ENCODE measurements at regions of chr17 and their contacts with region 1.

Region 1: GRCh38 chr17:28967221-28968140 is 16.2 kb upstream of the PHF12 start:
- DNase-seq: no peak
- ATAC-seq: no peak
- H3K4me3 Mint-ChIP-seq: no peak overlapping the region
- H3K27ac Mint-ChIP-seq: peak overlapping the region; percentile 51
- H3K4me1 Mint-ChIP-seq: peaks cover 4% of the 10 kb centered on the region
- H3K27me3 Mint-ChIP-seq: peaks cover 15% of the 10 kb centered on the region

Region 2: DNA sequence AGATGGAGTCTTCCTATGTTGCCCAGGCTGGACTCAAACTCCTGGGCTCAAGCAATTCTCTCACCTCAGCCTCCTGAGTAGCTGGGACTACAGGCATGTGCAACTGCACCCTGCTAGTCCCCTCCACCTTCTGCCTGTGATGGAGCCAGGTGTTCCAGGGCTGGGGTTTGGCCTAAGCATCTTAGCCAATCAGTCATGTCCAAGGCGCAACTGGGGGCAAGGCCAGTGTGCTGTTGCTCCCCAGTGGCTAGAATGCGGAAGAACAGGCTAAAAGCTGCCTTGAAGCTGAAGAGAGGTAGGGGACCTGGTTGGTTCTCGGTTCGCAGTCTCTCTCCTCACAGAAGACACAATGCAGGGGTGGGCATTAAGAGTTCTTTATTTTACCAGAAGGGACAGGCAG is 88.5 kb before region 1 on chr17:
- CTCF ChIA-PET with region 1: no interaction called
- POLR2A ChIA-PET with region 1: no interaction called
- DNase-seq: no peak
- ATAC-seq: no peak
- H3K4me3 Mint-ChIP-seq: no peak overlapping the region
- H3K27ac Mint-ChIP-seq: no peak overlapping the region
- H3K4me1 Mint-ChIP-seq: peaks cover 13% of the 10 kb centered on the region
- H3K27me3 Mint-ChIP-seq: no peaks in the 10 kb centered on the region

Region 3: DNA sequence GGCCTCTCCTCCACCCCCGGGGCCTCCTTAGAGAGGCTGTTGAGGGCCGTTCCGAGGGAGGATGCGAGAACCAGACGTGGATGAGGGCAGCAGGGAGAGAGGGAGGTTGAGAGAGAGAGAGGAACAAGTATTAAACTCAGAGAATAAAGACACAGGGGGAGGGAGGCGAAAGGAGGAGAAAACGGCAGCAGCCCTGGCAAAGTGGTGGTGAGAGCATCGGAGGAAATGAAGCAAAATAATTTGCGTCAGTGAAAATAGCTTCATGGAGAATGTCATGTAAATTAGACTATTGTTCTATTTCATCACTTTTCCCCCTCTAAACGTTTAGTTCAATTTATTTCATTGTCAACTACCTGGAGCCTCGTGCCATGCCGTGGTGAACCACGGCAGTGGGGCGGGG is 113.5 kb after region 1 on chr17:
- CTCF ChIA-PET with region 1: interaction called, 13 read pairs
- POLR2A ChIA-PET with region 1: no interaction called
- DNase-seq: no peak
- ATAC-seq: no peak
- H3K4me3 Mint-ChIP-seq: no peak overlapping the region
- H3K27ac Mint-ChIP-seq: no peak overlapping the region
- H3K4me1 Mint-ChIP-seq: no peaks in the 10 kb centered on the region
- H3K27me3 Mint-ChIP-seq: no peaks in the 10 kb centered on the region

Region 4: DNA sequence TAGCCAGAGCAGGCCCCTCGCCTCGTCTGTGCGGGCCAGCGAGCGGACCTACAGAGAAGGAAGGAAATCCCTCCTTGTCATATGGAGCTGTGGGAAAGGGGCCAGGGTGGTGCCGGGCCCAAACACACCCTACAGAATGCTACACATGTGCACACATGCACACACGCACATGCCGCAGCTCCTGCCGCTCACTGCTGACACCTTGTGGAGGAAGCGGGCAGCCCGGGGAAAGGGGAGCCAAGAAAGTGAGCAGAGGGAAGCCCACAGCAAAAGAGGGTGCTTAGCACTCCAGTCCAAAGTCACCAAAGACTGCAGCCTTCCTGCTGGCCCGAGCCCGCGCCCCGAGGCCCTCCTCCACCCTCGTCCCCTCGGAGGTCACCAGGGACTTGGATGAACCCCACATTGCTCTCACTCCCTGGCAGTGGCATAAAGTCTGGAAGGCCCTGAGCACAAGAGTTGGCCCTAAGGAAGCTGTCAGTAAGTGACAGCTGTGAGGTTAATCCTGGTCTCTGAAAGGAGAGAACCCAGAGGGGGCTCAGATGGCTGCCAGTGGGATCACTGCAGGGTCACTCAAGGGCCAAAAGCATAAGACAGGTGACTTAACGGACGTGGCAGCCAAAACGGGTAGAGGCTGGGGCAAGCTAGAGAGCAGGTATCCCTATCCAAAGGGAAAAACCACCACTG is 144.5 kb after region 1 on chr17:
- CTCF ChIA-PET with region 1: interaction called, 194 read pairs
- POLR2A ChIA-PET with region 1: no interaction called
- DNase-seq: peak; percentile 71
- ATAC-seq: peak; percentile 72
- H3K4me3 Mint-ChIP-seq: no peak overlapping the region
- H3K27ac Mint-ChIP-seq: no peak overlapping the region
- H3K4me1 Mint-ChIP-seq: peaks cover 7% of the 10 kb centered on the region
- H3K27me3 Mint-ChIP-seq: no peaks in the 10 kb centered on the region

Region 5: GRCh38 chr17:29124117-29124924 is 156.8 kb after region 1 on chr17:
- CTCF ChIA-PET with region 1: interaction called, 194 read pairs
- POLR2A ChIA-PET with region 1: no interaction called
- DNase-seq: peak; percentile 69
- ATAC-seq: peak; percentile 88
- H3K4me3 Mint-ChIP-seq: no peak overlapping the region
- H3K27ac Mint-ChIP-seq: peak overlapping the region; percentile 30
- H3K4me1 Mint-ChIP-seq: peaks cover 4% of the 10 kb centered on the region
- H3K27me3 Mint-ChIP-seq: no peaks in the 10 kb centered on the region

Region 6: DNA sequence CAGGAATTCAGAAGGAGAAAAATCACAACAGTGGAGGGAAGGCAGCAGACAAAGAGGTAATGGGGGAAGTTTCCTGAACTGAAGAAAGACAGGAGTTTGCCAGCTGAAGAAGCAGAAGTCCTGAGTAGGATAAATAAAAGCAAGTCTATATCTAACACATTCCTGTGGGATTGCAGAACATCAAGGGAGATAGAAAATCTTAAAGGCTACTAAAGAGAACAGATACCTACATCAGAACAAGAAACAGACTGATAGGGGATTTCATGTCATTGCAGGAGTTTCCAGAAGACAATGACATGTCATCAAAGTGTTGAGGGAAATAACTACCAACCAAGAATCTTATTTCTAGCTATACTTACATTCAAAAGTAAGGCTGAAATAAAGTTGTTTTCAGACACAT is 257.9 kb after region 1 on chr17:
- CTCF ChIA-PET with region 1: no interaction called
- POLR2A ChIA-PET with region 1: no interaction called
- DNase-seq: no peak
- ATAC-seq: no peak
- H3K4me3 Mint-ChIP-seq: no peak overlapping the region
- H3K27ac Mint-ChIP-seq: no peak overlapping the region
- H3K4me1 Mint-ChIP-seq: no peaks in the 10 kb centered on the region
- H3K27me3 Mint-ChIP-seq: peaks cover 15% of the 10 kb centered on the region